PC-3 (cell line): ENCODE measurements at regions of chr7 and their contacts with region 1.

Region 1: DNA sequence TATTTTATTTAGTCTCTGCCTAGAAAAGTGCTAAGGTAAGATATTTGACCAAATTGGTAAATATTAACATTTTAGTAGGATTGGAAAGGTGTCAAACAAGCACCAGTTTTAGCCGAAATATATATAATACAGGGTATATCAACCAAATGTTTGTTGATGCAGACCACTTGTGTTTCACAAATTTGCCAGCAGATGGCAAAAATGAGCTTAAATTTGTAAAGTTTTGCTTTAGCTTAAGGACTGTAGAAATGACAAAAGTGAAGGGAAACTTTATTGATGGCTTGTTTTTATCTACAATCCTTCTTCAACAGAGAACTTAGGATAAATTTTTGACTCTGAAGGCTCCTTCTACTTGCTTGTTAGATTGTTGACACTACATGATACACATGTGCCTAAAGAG is 4.8 kb upstream of the POLR1F start:
- DNase-seq: peak; percentile 82
- ATAC-seq: 0 out of 2 replicates have a peak, but pooled peaks have one; percentile 31
- H3K4me3 ChIP-seq: no peak overlapping the region
- H3K27ac ChIP-seq: no peak overlapping the region
- H3K4me1 ChIP-seq: peaks cover 5% of the 10 kb centered on the region; the same call in 1 of the 2 replicates
- H3K27me3 ChIP-seq: no peaks in the 10 kb centered on the region
- CTCF ChIP-seq: peak; percentile 78

Region 2: DNA sequence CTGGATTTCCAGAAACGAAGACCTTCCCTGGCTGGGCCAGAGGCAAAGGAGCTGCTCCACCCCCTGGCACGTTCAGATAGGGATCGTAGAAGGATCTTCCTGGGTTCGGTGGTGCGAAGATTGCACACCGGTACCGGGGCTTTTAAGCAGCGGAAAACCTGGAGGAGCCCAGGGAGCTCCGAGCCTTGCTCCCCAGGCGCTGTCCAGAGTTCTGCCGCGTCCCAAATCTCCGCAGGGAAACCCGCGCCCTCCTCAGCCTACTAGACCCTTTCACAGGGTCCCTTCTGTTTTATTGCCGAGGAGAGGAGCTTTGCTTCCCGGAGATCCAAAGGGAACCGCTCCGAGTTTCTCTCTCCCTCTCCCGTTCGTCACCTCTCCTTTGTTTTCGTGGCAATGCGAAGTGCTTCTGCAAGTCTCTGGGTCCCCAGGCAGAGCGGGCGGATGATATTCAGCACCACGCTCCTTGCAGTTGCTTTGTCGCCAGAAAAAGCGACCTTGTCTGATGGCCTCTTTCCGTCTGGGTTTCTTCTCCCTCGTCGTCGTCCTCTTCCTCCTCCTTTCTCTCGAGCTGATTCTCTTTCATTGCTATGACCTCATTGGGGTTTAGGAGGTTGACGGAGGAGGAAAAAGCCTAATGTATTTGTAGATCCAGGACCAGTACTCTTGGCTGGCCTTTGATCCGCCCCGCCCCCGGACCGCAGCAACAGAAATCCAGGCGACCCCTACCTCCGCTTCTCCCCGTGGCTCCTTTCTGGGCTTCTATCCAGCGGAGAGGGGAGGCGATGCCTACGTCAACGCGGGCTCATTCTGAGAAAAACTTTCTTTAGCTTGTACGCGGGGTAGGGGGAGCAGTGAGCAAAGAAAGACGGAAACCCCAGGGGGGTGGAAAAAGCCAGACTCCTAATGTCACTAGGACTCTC is 59.4 kb after region 1 on chr7 and contains the start of gene TMEM196:
- CTCF ChIA-PET with region 1: no interaction called
- POLR2A ChIA-PET with region 1: no interaction called
- intact Hi-C with region 1: no loop called
- DNase-seq: peak; percentile 10
- ATAC-seq: peak; percentile 54
- H3K4me3 ChIP-seq: no peak within 1 kb of the TSS; the same call in 1 of the 2 replicates
- H3K27ac ChIP-seq: no peak within 1 kb of the TSS
- H3K4me1 ChIP-seq: no peaks in the 10 kb centered on the region
- H3K27me3 ChIP-seq: no peaks in the 10 kb centered on the region
- CTCF ChIP-seq: no peak
- total RNA-seq, gene TMEM196: not detected in 2 replicates

Region 3: DNA sequence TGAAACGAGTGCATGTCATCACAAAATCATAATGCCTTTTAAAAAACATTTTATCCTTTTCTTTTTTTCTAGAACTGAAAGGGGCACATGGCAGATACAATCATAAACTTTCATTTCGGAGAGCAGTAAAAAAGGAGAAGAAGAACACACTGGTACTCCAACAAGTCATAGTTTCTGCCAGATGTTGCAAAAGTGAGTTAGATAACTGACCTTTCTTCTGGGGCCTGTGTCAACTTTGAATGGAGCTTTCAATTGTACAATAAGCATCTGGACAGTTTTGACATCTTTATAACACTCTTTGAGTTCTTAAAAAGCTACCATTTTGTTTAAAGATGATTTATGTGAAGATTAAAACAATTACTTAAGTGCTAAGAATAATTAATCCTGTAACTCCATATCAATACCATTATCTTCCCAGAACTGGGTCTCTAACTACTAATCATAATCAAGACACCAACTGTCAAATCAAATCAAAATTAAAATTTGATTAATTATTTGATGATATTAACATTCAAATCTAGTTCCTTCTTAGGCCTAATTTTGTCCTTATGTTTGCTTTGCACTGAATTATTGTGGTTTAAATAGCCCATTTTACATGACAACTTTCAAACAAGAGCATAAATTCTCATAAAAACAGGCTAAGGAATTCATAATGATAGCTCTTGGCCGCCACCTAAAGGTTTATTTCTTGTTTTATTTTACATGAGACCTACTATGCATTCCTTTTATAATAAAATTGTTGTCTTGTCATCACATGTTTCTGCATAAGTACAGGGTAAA is 597.5 kb after region 1 on chr7:
- CTCF ChIA-PET with region 1: no interaction called
- POLR2A ChIA-PET with region 1: no interaction called
- intact Hi-C with region 1: loop called (anchors 2 kb)
- DNase-seq: peak; percentile 81
- ATAC-seq: peak; percentile 45; the same call in 1 of the 2 replicates
- H3K4me3 ChIP-seq: no peak overlapping the region
- H3K27ac ChIP-seq: no peak overlapping the region
- H3K4me1 ChIP-seq: no peaks in the 10 kb centered on the region
- H3K27me3 ChIP-seq: no peaks in the 10 kb centered on the region
- CTCF ChIP-seq: peak; percentile 75

Region 4: DNA sequence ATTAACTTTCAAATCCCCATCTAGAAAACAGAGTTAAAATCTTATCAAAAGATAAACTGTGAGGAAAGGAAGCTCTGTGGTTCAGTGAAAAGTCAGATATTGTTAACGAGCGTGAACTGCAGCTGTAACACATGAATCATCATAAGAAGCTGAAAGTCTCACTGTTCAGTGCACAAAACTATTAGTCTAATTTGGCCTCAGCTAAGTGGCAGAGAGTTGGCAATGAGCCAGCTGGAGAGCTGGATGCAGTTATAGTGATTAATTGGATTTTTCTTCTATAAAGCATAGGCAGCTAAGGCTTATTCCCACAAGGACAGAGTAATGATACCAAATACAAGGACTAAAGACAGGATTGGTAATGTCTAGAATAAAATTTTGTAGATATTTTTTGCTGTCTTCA is 800.7 kb after region 1 on chr7:
- CTCF ChIA-PET with region 1: no interaction called
- POLR2A ChIA-PET with region 1: no interaction called
- intact Hi-C with region 1: loop called (anchors 10 kb)
- DNase-seq: peak; percentile 55
- ATAC-seq: peak; percentile 87
- H3K4me3 ChIP-seq: no peak overlapping the region
- H3K27ac ChIP-seq: no peak overlapping the region
- H3K4me1 ChIP-seq: peaks cover 8% of the 10 kb centered on the region
- H3K27me3 ChIP-seq: no peaks in the 10 kb centered on the region
- CTCF ChIP-seq: no peak

Region 5: GRCh38 chr7:20834656-20835055 is 1121.0 kb after region 1 on chr7:
- CTCF ChIA-PET with region 1: no interaction called
- POLR2A ChIA-PET with region 1: no interaction called
- intact Hi-C with region 1: loop called (anchors 10 kb)
- DNase-seq: peak; percentile 15
- ATAC-seq: no peak; the same call in 1 of the 2 replicates
- H3K4me3 ChIP-seq: no peak overlapping the region
- H3K27ac ChIP-seq: no peak overlapping the region
- H3K4me1 ChIP-seq: no peaks in the 10 kb centered on the region
- H3K27me3 ChIP-seq: peaks cover 27% of the 10 kb centered on the region
- CTCF ChIP-seq: peak; percentile 49; the same call in 1 of the 2 replicates